ENCODE measurements at regions of chr3 and their contacts with region 1.

Region 1: DNA sequence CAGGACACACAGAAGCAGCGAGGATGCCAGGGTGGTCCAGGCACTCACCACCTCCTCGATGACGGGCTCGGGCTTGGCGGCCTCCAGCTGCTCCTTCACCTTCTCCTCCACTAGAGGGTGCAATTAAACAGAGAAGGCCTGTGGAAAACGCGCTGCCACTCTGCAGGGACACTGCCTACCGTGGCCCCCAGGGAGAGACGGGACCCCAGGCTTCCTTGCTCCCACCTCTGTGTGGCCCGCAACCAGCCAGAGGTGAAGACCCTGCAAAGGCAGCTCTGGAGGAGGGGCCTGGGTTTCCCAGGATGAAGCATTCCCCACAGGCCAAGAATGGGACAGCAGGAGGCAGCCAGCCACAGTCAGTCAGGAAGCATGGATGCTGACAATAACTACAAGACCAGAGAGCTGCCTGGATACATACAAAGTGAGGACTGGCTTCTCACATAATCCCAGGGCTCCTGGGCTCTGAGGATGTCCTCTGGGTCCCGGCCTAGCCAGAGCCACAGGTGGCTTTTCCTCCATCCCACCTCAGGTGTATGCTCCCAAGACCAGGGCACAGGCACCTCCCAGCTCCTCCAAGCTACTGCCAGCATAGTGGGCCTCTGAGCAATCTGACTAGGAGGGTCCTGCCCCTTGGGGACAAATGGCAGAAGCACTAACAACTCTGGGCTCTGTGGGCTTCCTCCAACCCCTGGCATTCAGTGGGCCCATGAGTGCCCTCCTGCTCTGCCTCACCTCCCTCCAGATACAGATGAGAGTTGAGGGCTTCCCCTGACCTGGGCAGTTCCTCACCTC is 46.2 kb downstream of the PTH1R start:
- DNase-seq: peak; percentile 55 to 69
- H3K4me3 ChIP-seq: no peak overlapping the region
- H3K4me3 Mint-ChIP-seq: no peak overlapping the region
- H3K27ac Mint-ChIP-seq: peak overlapping the region; percentile 57
- H3K4me1 ChIP-seq: 0 out of 2 replicates have a peak, but pooled peaks cover 4% of the 10 kb centered on the region
- H3K4me1 Mint-ChIP-seq: peaks cover 3% of the 10 kb centered on the region
- H3K27me3 ChIP-seq: no peaks in the 10 kb centered on the region
- H3K27me3 Mint-ChIP-seq: no peaks in the 10 kb centered on the region
- CTCF ChIP-seq: peak; percentile 61 to 83

Region 2: DNA sequence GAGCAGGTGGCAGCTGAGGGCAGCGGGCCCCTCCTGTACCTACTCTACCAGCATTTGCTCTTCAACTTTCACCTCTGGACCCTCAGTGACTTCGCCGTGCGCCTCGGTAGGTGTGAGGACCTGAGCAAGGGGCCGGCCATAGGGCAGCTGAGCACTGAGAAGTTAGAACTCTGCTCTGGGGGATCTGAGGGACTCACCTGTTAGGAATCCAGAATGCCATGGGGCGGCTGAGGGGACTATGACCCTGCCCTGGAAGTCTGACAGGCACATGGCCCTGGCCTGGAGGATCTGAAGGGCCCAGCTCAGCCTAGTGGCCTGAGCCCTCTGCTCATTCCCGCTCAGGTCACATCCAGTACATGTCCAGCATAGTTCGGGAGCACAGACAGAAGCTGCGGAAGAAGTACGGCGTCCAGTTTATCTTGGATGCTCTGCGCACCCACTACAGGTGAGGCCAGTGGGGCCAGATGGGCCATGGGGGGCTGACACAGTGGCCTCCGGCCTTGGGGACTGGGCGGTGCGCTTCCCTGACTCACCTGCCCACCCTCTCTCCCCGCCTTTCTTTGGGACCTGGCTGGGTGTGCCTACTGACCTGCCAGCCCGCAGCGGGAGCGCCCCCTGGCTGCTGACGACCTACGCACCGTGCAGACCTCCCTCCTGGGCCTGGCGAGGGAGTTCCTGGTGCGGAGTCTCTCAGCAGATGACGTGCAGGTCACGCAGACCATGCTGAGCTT is 74.5 kb after region 1 on chr3:
- CTCF ChIA-PET with region 1: interaction called, 7 read pairs
- POLR2A ChIA-PET with region 1: no interaction called
- intact Hi-C with region 1: loop called (anchors 1 kb)
- DNase-seq: peak; percentile 69 to 84
- H3K4me3 ChIP-seq: no peak overlapping the region
- H3K4me3 Mint-ChIP-seq: no peak overlapping the region
- H3K27ac Mint-ChIP-seq: no peak overlapping the region
- H3K4me1 ChIP-seq: peaks cover 11% of the 10 kb centered on the region
- H3K4me1 Mint-ChIP-seq: peaks cover 6% of the 10 kb centered on the region
- H3K27me3 ChIP-seq: no peaks in the 10 kb centered on the region
- H3K27me3 Mint-ChIP-seq: no peaks in the 10 kb centered on the region
- CTCF ChIP-seq: peak; percentile 76 to 85